Spleen (tissue), 13 donors: ENCODE measurements at regions of chr9 and their contacts with region 1.

Region 1: GRCh38 chr9:22452415-22453010 is 5.9 kb downstream of the DMRTA1 start:
- DNase-seq: peak; percentile 51
- H3K4me3 ChIP-seq: no peak overlapping the region
- H3K27ac ChIP-seq: no peak overlapping the region
- H3K4me1 ChIP-seq: peaks cover 0 to 12% (median 3%) of the 10 kb centered on the region in 6 donors
- H3K27me3 ChIP-seq: peaks cover 0 to 40% (median 2%) of the 10 kb centered on the region in 7 donors
- CTCF ChIP-seq: peak; percentile 37 to 86 (median 77)
- POLR2A ChIP-seq: no peak

Region 2: DNA sequence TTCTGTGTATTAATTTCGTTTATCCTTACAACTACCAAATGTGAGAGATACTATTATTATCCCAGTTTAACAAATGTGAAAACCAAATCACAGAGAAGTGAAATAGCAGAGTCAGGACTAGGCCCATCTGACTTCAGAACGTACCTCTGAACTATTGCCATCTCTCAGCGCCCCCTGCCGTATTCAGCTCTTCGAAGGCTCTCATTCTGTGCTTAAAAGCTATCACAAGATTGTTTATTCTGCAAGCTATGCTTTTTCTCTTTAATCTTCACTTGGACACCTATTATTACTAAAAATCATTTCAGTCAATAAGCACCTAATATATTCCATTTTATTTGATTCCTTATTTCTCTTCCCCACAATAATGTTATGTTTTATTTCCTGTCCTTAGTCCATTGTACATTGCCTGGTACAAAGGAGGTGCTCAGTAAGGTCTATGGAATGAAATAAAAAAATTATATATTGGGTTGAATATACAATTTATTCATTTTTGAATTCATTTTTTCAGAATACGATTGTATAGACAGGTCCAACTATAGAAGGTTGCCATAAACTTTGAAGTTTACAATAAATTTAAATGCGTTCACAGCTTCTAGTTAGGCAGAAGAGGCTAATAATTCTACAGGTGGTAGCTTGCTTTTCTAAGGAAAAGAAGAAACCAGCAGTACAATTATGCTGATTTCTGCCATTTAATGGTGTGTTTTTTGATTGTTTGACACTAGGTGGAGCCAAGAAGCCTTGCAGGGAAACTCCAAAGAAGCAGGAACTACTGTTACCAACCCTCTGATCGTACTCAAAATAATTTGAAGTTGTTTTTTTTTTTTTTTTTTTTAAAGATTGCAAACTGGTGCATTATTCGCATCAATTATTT is 208.1 kb before region 1 on chr9:
- intact Hi-C with region 1: loop called (anchors 5 kb)
- DNase-seq: peak; percentile 71
- H3K4me3 ChIP-seq: peak overlapping the region in 3 of 8 donors; percentile 3 to 25 (median 14)
- H3K27ac ChIP-seq: no peak overlapping the region
- H3K4me1 ChIP-seq: peaks cover 11 to 40% (median 17%) of the 10 kb centered on the region in 6 donors
- H3K27me3 ChIP-seq: no peaks in the 10 kb centered on the region
- CTCF ChIP-seq: peak in 5 of 11 experiments; percentile 30 to 45 (median 37)
- POLR2A ChIP-seq: no peak